ENCODE measurements at regions of chr3 and their contacts with region 1.

Region 1: DNA sequence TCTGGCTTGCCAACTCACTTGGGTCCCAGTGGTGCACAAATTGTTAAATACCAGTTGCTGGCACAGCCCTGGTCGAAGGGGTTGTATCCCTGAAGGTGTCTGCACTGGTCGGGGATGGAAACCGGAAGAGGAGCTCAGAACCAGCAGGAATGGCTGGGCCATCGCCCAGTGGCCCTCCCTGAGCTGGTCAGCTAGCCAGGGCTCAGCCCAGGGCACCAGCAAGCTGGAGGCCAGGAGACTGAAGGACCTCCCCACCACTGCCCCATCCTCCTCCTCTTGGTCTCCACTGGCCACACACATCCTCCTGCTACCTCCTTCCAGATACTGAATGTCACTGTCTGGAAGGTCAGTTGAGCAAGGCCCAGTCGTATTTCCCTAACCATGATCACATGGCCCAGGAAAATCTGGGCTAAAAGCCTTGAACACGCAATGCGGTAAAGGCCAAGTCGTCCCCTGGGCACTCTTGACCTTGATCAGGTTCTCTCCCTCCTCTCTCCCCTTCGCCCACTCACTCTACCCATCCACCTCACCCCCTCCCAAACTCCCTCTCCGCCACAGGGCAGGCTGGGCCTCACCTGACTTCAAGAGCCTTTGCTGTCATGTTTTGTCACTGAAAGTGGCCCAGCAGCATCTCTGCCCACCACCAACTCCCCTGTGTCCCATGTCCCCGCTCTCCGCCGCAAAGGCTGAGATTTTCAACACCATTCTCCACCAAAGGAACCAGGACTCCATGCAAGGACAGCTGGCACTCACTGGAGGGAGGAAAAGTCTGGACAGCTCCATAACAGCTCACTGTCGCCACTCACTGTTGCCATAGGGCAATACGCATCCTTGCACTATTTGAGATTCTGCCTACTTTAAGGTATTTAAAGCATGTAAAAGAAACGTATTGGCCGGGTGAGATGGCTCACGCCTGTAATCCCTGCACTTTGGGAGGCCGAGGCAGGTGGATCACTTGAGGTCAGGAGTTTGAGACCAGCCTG is 12.1 kb downstream of the ZDHHC19 start:
- DNase-seq: no peak
- H3K4me3 ChIP-seq: no peak overlapping the region
- H3K27ac ChIP-seq: no peak overlapping the region
- H3K4me1 ChIP-seq: no peaks in the 10 kb centered on the region
- H3K27me3 ChIP-seq: peaks cover 2% of the 10 kb centered on the region in 2 experiments
- CTCF ChIP-seq: peak in 1 of 2 donors; percentile 9
- POLR2A ChIP-seq: no peak

Region 2: GRCh38 chr3:196020373-196020772 is 178.7 kb before region 1 on chr3:
- CTCF ChIA-PET with region 1: interaction called, 9 read pairs
- POLR2A ChIA-PET with region 1: no interaction called
- dilution Hi-C with region 1: no loop called
- intact Hi-C with region 1: loop called (anchors 1 kb)
- DNase-seq: no peak
- H3K4me3 ChIP-seq: no peak overlapping the region
- H3K27ac ChIP-seq: no peak overlapping the region
- H3K4me1 ChIP-seq: no peaks in the 10 kb centered on the region
- H3K27me3 ChIP-seq: peaks cover 7 to 11% of the 10 kb centered on the region in 2 experiments
- CTCF ChIP-seq: no peak
- POLR2A ChIP-seq: no peak

Region 3: GRCh38 chr3:196073188-196073838 is 125.7 kb before region 1 on chr3:
- CTCF ChIA-PET with region 1: interaction called, 52 read pairs
- POLR2A ChIA-PET with region 1: no interaction called
- dilution Hi-C with region 1: no loop called
- intact Hi-C with region 1: loop called (anchors 1 kb)
- DNase-seq: peak; percentile 66
- H3K4me3 ChIP-seq: no peak overlapping the region
- H3K27ac ChIP-seq: no peak overlapping the region
- H3K4me1 ChIP-seq: no peaks in the 10 kb centered on the region
- H3K27me3 ChIP-seq: no peaks in the 10 kb centered on the region
- CTCF ChIP-seq: peak; percentile 72 to 80
- POLR2A ChIP-seq: no peak

Region 4: DNA sequence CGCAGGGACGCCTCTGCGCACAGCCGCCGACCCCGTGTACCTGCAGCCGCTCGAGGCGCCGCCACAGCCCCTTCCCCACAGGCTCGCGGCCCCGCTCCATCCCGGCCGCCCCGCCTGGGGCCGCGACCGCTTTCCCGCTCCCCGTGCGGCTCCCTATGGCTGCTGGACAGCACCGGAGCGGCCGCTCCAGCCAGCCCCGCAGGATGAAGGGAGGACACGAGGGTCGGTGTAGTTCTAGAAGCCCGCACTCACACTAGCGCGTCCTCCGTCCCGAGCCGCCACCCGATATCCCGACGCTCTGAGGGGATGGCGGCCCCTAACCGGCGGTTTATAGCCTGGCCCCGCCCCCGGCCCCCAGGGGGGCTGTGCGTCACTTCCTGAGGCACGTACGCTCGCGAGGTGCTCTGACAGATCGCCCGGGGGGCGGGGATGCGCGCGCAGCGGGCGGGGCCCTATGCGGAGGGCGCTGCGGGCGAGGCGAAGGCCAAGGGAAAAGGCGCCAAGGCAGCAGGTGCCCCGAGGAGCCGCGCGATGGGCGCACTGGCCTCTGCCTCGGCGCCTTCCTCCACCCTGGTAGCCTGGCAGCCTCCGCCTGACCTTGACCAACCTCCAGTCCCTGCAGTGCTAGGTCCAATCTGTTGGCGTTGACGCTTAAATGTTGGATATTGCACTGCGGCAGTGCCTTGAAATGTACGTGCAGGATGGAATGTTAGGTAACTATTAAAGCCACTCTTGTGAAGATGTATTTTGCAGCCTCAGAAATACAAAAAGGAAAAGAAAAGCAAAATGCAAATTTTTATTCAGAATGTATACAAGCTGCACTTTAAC is 117.1 kb before region 1 on chr3 and contains the start of gene TFRC:
- CTCF ChIA-PET with region 1: interaction called, 4 read pairs
- POLR2A ChIA-PET with region 1: no interaction called
- dilution Hi-C with region 1: no loop called
- intact Hi-C with region 1: loop called (anchors 1 kb)
- DNase-seq: peak; percentile 87
- H3K4me3 ChIP-seq: peak within 1 kb of the TSS; percentile 32 to 82 (median 67)
- H3K27ac ChIP-seq: peak within 1 kb of the TSS; percentile 49
- H3K4me1 ChIP-seq: peaks cover 7% of the 10 kb centered on the region
- H3K27me3 ChIP-seq: no peaks in the 10 kb centered on the region
- CTCF ChIP-seq: no peak
- POLR2A ChIP-seq: peak; percentile 97
- total RNA-seq, gene TFRC: 58.4 and 69.6 TPM in 2 replicates

Region 5: DNA sequence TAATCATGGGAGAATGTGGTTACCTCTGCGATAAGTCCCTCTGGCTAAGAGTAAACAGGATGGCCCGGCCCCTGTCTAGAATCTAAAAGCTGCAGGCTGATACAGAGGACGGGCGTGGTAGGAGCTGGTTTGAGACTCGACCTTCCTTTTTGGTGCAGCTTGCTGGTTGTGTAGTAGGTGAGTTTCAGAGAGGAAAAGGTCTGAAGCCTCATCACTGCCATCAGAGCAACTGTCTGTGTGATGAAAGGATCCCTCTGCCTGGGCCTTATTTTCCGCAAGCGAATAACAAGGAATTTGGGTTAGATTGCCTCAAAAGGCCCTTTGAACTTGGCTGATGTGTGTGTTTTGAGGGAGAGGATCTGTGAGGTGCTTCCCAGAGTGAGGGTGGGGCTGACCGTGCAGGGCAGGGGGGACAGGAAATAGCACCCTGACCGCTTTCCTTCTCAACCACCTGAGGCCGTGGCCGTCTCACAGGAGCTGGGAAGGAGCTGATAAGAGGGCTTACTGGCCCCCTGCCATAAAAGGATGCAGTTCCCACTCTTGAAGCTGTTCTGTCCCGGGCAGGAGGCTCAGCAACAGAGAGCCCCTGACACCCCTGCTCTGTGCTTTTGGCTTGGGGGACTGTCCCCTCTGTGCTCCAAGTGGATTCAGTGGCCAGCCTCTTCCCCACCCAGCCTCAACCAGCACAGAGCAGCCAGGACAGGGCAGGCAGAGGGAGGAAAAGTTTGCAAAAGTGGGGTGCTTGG is 71.6 kb before region 1 on chr3:
- CTCF ChIA-PET with region 1: no interaction called
- POLR2A ChIA-PET with region 1: no interaction called
- dilution Hi-C with region 1: no loop called
- intact Hi-C with region 1: no loop called
- DNase-seq: no peak
- H3K4me3 ChIP-seq: no peak overlapping the region
- H3K27ac ChIP-seq: no peak overlapping the region
- H3K4me1 ChIP-seq: no peaks in the 10 kb centered on the region
- H3K27me3 ChIP-seq: no peaks in the 10 kb centered on the region
- CTCF ChIP-seq: no peak
- POLR2A ChIP-seq: no peak

Measured in endothelial cell of umbilical vein (primary cell).